CD4-positive, alpha-beta T cell (primary cell): ENCODE measurements at regions of chr1 and their contacts with region 1.

Region 1: DNA sequence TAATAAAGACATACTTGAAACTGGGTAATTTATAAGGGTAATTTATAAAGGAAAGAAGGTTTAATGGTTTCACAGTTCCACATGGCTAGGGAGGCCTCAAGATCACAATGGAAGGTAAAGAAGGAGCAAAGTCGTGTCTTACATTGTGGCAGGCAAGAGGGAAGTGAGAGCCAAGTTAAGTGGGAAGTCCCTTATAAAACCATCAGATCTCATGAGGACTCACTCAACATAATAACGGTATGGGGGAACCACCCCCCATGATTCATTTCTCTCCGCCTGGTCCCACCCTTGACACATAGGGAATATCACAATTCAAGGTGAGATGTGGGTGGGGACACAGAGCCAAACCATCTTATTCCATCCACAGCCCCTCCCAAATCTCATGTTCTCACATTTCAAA is 76.8 kb upstream of the ZNF678 start:
- DNase-seq: peak in 1 of 14 experiments; percentile 7
- ATAC-seq: no peak
- H3K4me3 ChIP-seq: no peak overlapping the region
- H3K4me3 Mint-ChIP-seq: no peak overlapping the region
- H3K27ac ChIP-seq: no peak overlapping the region
- H3K27ac Mint-ChIP-seq: no peak overlapping the region
- H3K4me1 ChIP-seq: no peaks in the 10 kb centered on the region
- H3K4me1 Mint-ChIP-seq: no peaks in the 10 kb centered on the region
- H3K27me3 ChIP-seq: no peaks in the 10 kb centered on the region
- H3K27me3 Mint-ChIP-seq: peaks cover 3% of the 10 kb centered on the region
- CTCF ChIP-seq: no peak

Region 2: GRCh38 chr1:227174164-227174563 is 312.4 kb before region 1 on chr1:
- CTCF ChIA-PET with region 1: no interaction called
- POLR2A ChIA-PET with region 1: no interaction called
- intact Hi-C with region 1: no loop called
- DNase-seq: no peak
- ATAC-seq: no peak
- H3K4me3 ChIP-seq: no peak overlapping the region
- H3K4me3 Mint-ChIP-seq: no peak overlapping the region
- H3K27ac ChIP-seq: no peak overlapping the region
- H3K27ac Mint-ChIP-seq: no peak overlapping the region
- H3K4me1 ChIP-seq: no peaks in the 10 kb centered on the region
- H3K4me1 Mint-ChIP-seq: no peaks in the 10 kb centered on the region
- H3K27me3 ChIP-seq: peaks cover 0 to 5% of the 10 kb centered on the region in 2 experiments
- H3K27me3 Mint-ChIP-seq: peaks cover 14% of the 10 kb centered on the region
- CTCF ChIP-seq: no peak

Region 3: GRCh38 chr1:227946624-227947385 is 460.2 kb after region 1 on chr1:
- CTCF ChIA-PET with region 1: no interaction called
- POLR2A ChIA-PET with region 1: no interaction called
- intact Hi-C with region 1: loop called (anchors 1 to 2 kb)
- DNase-seq: peak in 13 of 14 experiments; percentile 35 to 75 (median 52)
- ATAC-seq: peak; percentile 71
- H3K4me3 ChIP-seq: peak overlapping the region; percentile 33
- H3K4me3 Mint-ChIP-seq: peak overlapping the region; percentile 72
- H3K27ac ChIP-seq: no peak overlapping the region
- H3K27ac Mint-ChIP-seq: no peak overlapping the region
- H3K4me1 ChIP-seq: peaks cover 22% of the 10 kb centered on the region
- H3K4me1 Mint-ChIP-seq: no peaks in the 10 kb centered on the region
- H3K27me3 ChIP-seq: peaks cover 13 to 19% of the 10 kb centered on the region in 2 experiments
- H3K27me3 Mint-ChIP-seq: peaks cover 19% of the 10 kb centered on the region
- CTCF ChIP-seq: peak; percentile 87

Region 4: DNA sequence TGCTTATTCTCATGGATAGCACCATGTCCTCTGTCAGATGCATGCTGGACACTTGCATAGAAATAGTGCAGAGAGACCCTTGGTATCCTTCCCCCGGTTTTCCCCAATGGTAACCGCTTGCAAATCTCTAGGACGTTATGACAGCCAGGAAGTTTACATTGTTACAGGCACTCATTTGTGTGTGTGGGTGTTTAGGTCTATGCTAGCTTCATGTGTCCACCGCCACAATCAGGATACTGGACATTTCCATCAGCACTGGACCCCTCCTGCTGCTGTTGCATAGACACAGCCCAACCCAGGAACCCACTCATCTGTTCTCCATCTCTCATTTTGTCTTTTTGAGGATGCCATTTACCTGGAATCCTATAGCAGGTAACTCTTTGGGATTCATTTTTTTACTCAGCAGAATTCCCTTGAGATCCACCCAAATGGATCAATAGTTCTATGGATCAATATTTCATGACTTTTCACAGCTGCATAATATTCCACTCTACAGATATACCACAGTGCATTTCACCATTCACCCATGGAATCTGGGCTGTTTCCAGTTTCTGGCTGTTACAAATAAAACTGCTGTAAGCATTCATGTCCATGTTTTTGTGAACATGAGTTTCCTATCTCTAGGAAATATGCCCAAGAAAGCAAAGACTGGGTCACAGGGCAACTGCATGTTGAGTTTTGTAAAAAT is 467.7 kb after region 1 on chr1:
- CTCF ChIA-PET with region 1: interaction called, 6 read pairs
- POLR2A ChIA-PET with region 1: no interaction called
- intact Hi-C with region 1: loop called (anchors 1 to 2 kb)
- DNase-seq: peak in 1 of 14 experiments; percentile 0
- ATAC-seq: no peak
- H3K4me3 ChIP-seq: no peak overlapping the region
- H3K4me3 Mint-ChIP-seq: no peak overlapping the region
- H3K27ac ChIP-seq: no peak overlapping the region
- H3K27ac Mint-ChIP-seq: no peak overlapping the region
- H3K4me1 ChIP-seq: peaks cover 7% of the 10 kb centered on the region
- H3K4me1 Mint-ChIP-seq: no peaks in the 10 kb centered on the region
- H3K27me3 ChIP-seq: peaks cover 18 to 27% of the 10 kb centered on the region in 2 experiments
- H3K27me3 Mint-ChIP-seq: peaks cover 51% of the 10 kb centered on the region
- CTCF ChIP-seq: no peak